Activated CD4-positive, alpha-beta T cell treated with anti-CD3 and anti-CD28 coated beads for 36 hours (primary cell): ENCODE measurements at regions of chr2 and their contacts with region 1.

Region 1: DNA sequence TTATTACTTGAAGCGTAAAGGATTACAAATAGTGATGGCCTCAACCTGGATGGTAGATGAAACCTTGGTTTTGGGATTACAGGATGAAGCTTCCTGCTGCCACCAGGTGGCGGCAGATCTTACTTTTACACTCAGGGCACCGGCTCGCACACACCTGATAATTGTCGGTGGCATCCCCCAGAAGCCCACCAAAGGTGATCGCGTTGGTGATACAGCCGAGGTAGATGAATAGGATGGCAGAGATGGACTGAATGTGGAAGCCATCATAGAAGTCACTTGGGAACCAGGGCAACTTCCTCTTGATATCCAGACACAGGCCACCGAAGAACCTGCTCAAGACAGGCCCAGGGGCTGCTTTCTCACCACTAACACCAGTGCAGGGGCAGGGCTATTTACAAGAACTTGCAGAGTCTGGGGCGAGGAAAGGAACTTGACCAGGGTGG is 51.8 kb downstream of the MTHFD2 start:
- DNase-seq: peak; percentile 75
- ATAC-seq: peak; percentile 78
- H3K4me3 Mint-ChIP-seq: no peak overlapping the region
- H3K27ac Mint-ChIP-seq: no peak overlapping the region
- H3K4me1 Mint-ChIP-seq: no peaks in the 10 kb centered on the region
- H3K27me3 Mint-ChIP-seq: no peaks in the 10 kb centered on the region

Region 2: DNA sequence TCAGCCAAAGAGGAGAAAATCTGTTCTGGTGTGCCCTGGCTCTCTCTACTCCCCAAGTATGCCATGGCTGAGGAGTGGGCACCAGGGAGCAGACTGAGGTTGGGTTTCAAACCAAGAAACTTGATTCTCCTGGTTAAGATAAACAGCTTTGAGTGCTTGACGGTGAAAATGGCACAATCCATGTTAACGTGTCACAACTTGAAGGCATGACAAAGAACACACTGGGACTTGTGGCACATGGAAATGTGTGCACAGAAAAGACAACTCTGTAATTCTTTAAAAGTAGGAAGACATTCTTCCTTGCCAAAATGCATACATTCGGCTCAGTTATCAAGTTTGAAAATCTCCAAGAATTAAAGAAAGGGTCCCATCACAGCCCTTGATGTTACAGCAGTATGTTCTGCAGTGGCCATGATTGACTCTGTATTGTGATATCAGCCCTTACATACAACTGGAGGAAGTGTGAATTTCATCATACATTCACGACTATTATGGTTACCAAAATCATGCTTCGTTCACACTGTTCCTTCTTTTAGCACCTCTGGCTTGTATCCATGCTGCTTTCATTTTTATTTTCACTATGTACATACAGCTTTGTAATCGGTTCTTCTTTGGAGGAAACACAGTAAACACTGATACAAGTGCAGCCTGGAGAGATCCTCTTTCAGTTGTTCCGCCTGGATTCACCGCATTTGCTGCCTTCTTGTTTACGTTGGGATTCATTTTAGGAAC is 373.0 kb before region 1 on chr2:
- CTCF ChIA-PET with region 1: no interaction called
- POLR2A ChIA-PET with region 1: no interaction called
- intact Hi-C with region 1: no loop called
- DNase-seq: no peak
- ATAC-seq: peak; percentile 70
- H3K4me3 Mint-ChIP-seq: no peak overlapping the region
- H3K27ac Mint-ChIP-seq: no peak overlapping the region
- H3K4me1 Mint-ChIP-seq: no peaks in the 10 kb centered on the region
- H3K27me3 Mint-ChIP-seq: no peaks in the 10 kb centered on the region

Region 3: GRCh38 chr2:74168739-74169138 is 81.5 kb before region 1 on chr2:
- CTCF ChIA-PET with region 1: no interaction called
- POLR2A ChIA-PET with region 1: no interaction called
- intact Hi-C with region 1: no loop called
- DNase-seq: no peak
- ATAC-seq: peak; percentile 74
- H3K4me3 Mint-ChIP-seq: no peak overlapping the region
- H3K27ac Mint-ChIP-seq: peak overlapping the region; percentile 59
- H3K4me1 Mint-ChIP-seq: peaks cover 21% of the 10 kb centered on the region
- H3K27me3 Mint-ChIP-seq: no peaks in the 10 kb centered on the region

Region 4: GRCh38 chr2:74238879-74239278 is 11.3 kb before region 1 on chr2:
- CTCF ChIA-PET with region 1: interaction called, 12 read pairs
- POLR2A ChIA-PET with region 1: no interaction called
- intact Hi-C with region 1: no loop called
- DNase-seq: no peak
- ATAC-seq: peak; percentile 26
- H3K4me3 Mint-ChIP-seq: no peak overlapping the region
- H3K27ac Mint-ChIP-seq: no peak overlapping the region
- H3K4me1 Mint-ChIP-seq: peaks cover 3% of the 10 kb centered on the region
- H3K27me3 Mint-ChIP-seq: no peaks in the 10 kb centered on the region

Region 5: GRCh38 chr2:74328074-74328473 is 77.9 kb after region 1 on chr2:
- CTCF ChIA-PET with region 1: interaction called, 103 read pairs
- POLR2A ChIA-PET with region 1: no interaction called
- intact Hi-C with region 1: no loop called
- DNase-seq: no peak
- ATAC-seq: no peak
- H3K4me3 Mint-ChIP-seq: no peak overlapping the region
- H3K27ac Mint-ChIP-seq: no peak overlapping the region
- H3K4me1 Mint-ChIP-seq: no peaks in the 10 kb centered on the region
- H3K27me3 Mint-ChIP-seq: no peaks in the 10 kb centered on the region

Region 6: GRCh38 chr2:74391580-74392448 is 141.6 kb after region 1 on chr2:
- CTCF ChIA-PET with region 1: interaction called, 8 read pairs
- POLR2A ChIA-PET with region 1: no interaction called
- intact Hi-C with region 1: loop called in 1 of 2 experiments (anchors 2 kb)
- DNase-seq: peak; percentile 98
- ATAC-seq: peak; percentile 78
- H3K4me3 Mint-ChIP-seq: peak overlapping the region; percentile 86
- H3K27ac Mint-ChIP-seq: peak overlapping the region; percentile 99
- H3K4me1 Mint-ChIP-seq: peaks cover 7% of the 10 kb centered on the region
- H3K27me3 Mint-ChIP-seq: no peaks in the 10 kb centered on the region

Region 7: DNA sequence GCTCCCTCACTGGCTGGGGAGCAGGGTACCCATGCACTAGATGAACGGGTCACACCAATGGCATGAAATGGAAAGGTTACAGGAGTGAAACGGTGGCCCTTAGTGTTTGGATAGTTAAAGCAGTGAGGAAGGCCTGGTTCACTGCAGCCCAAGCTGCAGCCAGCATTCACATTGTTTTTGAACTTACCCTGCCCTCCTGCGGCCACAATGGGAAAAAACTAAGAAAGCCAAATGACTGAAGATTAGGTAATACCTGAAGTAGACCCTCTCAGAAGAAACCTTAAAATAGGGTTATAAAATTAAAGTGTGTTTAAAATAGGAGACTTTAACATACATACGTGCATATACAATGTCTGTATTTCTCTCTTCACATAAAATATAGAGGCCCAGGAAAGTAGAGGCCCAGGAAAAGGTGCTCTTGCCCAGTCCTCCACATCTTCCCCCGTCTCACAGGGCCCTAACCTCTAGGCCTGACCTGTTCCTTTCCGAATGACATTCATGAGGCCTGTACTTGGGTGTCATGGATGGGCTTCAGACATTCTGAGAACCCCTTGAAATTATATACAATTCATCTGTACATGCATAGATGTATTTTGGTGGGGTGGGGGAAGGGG is 337.6 kb after region 1 on chr2:
- CTCF ChIA-PET with region 1: interaction called, 3 read pairs
- POLR2A ChIA-PET with region 1: no interaction called
- intact Hi-C with region 1: loop called in 1 of 2 experiments (anchors 5 kb)
- DNase-seq: peak; percentile 75
- ATAC-seq: peak; percentile 62
- H3K4me3 Mint-ChIP-seq: no peak overlapping the region
- H3K27ac Mint-ChIP-seq: no peak overlapping the region
- H3K4me1 Mint-ChIP-seq: peaks cover 26% of the 10 kb centered on the region
- H3K27me3 Mint-ChIP-seq: peaks cover 3% of the 10 kb centered on the region